Gastrocnemius medialis (tissue), 4 donors: ENCODE measurements at regions of chr11 and their contacts with region 1.

Region 1: DNA sequence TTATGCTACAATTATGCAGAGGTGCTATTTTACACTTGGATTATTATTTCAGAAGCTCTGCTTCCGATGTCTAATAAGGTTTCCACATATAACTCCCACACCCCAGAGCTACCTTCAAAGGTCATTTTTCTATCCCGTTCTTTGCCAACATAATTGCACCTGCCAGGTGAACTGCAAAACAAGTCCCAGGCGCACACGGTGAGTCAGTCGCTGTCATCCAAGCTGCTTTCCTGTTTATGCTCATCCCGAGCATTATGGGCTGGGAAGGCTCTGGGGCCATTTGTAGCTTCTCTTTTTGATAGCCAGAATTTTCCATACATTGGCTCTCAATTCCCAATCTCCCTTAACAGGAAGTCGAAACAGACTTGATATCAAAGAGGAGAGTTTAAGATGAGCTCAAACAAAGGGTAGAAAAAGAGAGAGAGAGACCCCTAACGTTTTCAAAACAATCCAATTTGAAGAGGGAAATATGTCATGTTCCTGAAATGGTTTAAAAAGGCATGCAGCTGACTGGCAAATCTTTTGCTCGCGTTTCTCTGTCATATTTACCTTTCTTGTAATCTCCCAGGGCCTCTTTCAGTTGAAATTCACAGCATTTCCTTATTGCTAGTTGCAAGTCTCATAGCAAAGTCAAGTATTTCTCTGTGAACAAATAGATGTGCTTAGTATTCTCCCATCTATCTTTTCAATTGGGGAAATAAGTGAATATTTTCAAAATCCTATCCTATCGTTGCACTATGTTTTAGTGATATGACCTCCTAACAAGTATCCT is 815.9 kb downstream of the KCNA4 start:
- DNase-seq: no peak
- ATAC-seq: no peak
- H3K4me3 ChIP-seq: no peak overlapping the region
- H3K27ac ChIP-seq: no peak overlapping the region
- H3K4me1 ChIP-seq: no peaks in the 10 kb centered on the region
- H3K27me3 ChIP-seq: no peaks in the 10 kb centered on the region
- CTCF ChIP-seq: no peak
- POLR2A ChIP-seq: no peak

Region 2: DNA sequence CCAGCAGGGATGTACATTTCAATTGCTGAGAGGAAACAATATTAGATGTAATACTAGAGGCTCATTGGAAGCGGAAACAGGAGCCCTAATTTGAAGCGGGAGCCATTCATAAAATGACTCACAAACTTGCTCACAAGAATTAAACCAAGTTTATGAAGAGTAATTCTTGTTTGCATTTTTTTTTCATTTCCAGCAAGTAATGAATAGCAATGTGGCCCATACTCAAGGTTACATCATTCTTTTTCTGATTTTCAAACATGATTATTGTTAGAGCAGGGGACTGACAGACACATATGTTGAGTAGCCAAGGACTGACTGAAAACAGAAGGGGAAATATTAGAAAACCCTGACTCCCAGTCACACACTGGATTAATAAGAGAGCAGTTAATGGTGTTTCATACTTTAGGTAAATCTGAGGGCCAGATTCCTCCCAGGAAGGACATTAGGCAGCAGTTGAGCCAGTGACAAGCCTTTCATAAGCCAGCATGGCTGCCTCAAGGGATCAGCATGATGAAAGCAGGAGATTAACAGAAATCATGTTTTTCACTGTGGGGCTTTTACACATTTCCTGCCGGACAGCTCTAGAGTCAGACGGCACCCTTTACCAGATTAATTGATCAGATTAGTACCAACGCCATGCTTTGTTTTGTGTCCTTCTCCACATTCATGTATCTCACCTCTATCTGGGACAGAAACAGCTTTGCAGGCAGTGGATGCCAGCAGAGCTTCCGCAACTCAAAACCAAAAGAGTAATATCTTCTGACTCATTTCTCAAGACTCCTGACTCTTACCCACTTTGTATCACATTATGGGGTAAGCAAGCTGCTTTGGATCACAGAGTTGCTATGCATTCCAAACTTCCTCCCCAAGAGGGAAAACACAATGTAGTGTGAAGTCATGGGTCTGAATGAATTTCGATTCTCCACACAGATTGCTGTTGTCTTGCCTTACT is 15.8 kb before region 1 on chr11:
- in situ Hi-C with region 1: no loop called
- intact Hi-C with region 1: loop called (anchors 1 kb)
- DNase-seq: no peak
- ATAC-seq: peak in 1 of 2 donors; percentile 30
- H3K4me3 ChIP-seq: no peak overlapping the region
- H3K27ac ChIP-seq: no peak overlapping the region
- H3K4me1 ChIP-seq: no peaks in the 10 kb centered on the region
- H3K27me3 ChIP-seq: no peaks in the 10 kb centered on the region
- CTCF ChIP-seq: no peak
- POLR2A ChIP-seq: no peak